GM12878 (cell line): ENCODE measurements at regions of chr19 and their contacts with region 1.

Region 1: GRCh38 chr19:40425450-40426287 is at the start of gene SERTAD1:
- DNase-seq: peak; percentile 96
- ATAC-seq: peak; percentile 90
- H3K4me3 ChIP-seq: peak within 1 kb of the TSS; percentile 97
- H3K27ac ChIP-seq: peak within 1 kb of the TSS; percentile 84
- H3K4me1 ChIP-seq: no peaks in the 10 kb centered on the region
- H3K27me3 ChIP-seq: no peaks in the 10 kb centered on the region
- CTCF ChIP-seq: peak; percentile 53 to 89 (median 58)
- EP300 ChIP-seq: no peak
- POLR2A ChIP-seq: peak; percentile 99
- RAD21 ChIP-seq: no peak
- polyA plus RNA-seq, gene SERTAD1: 0.23 to 1.6 TPM

Region 2: GRCh38 chr19:40298026-40298425 is 127.6 kb before region 1 on chr19:
- CTCF ChIA-PET with region 1: no interaction called
- POLR2A ChIA-PET with region 1: no interaction called
- RAD21 ChIA-PET with region 1: no interaction called
- SMC1A ChIA-PET with region 1: no interaction called
- in situ Hi-C with region 1: no loop called
- intact Hi-C with region 1: no loop called
- DNase-seq: no peak
- ATAC-seq: no peak
- H3K4me3 ChIP-seq: no peak overlapping the region
- H3K27ac ChIP-seq: no peak overlapping the region
- H3K4me1 ChIP-seq: no peaks in the 10 kb centered on the region
- H3K27me3 ChIP-seq: no peaks in the 10 kb centered on the region
- CTCF ChIP-seq: no peak
- EP300 ChIP-seq: no peak
- POLR2A ChIP-seq: no peak
- RAD21 ChIP-seq: no peak

Region 3: GRCh38 chr19:40411125-40411842 is 14.4 kb before region 1 on chr19:
- CTCF ChIA-PET with region 1: interaction called, 43 read pairs
- POLR2A ChIA-PET with region 1: interaction called, 12 read pairs
- RAD21 ChIA-PET with region 1: interaction called, 12 read pairs
- SMC1A ChIA-PET with region 1: interaction called, 9 read pairs
- in situ Hi-C with region 1: no loop called
- intact Hi-C with region 1: no loop called
- DNase-seq: no peak
- ATAC-seq: peak; percentile 68
- H3K4me3 ChIP-seq: no peak overlapping the region
- H3K27ac ChIP-seq: peak overlapping the region; percentile 78
- H3K4me1 ChIP-seq: peaks cover 42% of the 10 kb centered on the region
- H3K27me3 ChIP-seq: no peaks in the 10 kb centered on the region
- CTCF ChIP-seq: no peak
- EP300 ChIP-seq: no peak
- POLR2A ChIP-seq: peak; percentile 49; the same call in 1 of the 2 replicates
- RAD21 ChIP-seq: no peak

Region 4: GRCh38 chr19:40444192-40445028 is 18.7 kb after region 1 on chr19 and contains the start of gene SERTAD3:
- CTCF ChIA-PET with region 1: interaction called, 40 read pairs
- POLR2A ChIA-PET with region 1: interaction called, 55 read pairs
- RAD21 ChIA-PET with region 1: interaction called, 35 read pairs
- SMC1A ChIA-PET with region 1: interaction called, 35 read pairs
- in situ Hi-C with region 1: no loop called
- intact Hi-C with region 1: loop called (anchors 1 kb)
- DNase-seq: peak; percentile 76
- ATAC-seq: peak; percentile 88
- H3K4me3 ChIP-seq: peak within 1 kb of the TSS; percentile 88
- H3K27ac ChIP-seq: peak within 1 kb of the TSS; percentile 94
- H3K4me1 ChIP-seq: peaks cover 5% of the 10 kb centered on the region
- H3K27me3 ChIP-seq: no peaks in the 10 kb centered on the region
- CTCF ChIP-seq: peak; percentile 25 to 60 (median 52); a peak in 4 of 6 replicates
- EP300 ChIP-seq: peak in 1 of 2 experiments; percentile 38; a peak in 1 of 4 replicates
- POLR2A ChIP-seq: peak; percentile 97
- RAD21 ChIP-seq: peak; percentile 65
- polyA plus RNA-seq, gene SERTAD3: 4.2 to 8.4 TPM